GM18951 (cell line): ENCODE measurements at regions of chr17 and their contacts with region 1.

Region 1: GRCh38 chr17:988561-988960 is 8.4 kb upstream of the TIMM22 start:
- POLR2A ChIP-seq: no peak

Region 2: DNA sequence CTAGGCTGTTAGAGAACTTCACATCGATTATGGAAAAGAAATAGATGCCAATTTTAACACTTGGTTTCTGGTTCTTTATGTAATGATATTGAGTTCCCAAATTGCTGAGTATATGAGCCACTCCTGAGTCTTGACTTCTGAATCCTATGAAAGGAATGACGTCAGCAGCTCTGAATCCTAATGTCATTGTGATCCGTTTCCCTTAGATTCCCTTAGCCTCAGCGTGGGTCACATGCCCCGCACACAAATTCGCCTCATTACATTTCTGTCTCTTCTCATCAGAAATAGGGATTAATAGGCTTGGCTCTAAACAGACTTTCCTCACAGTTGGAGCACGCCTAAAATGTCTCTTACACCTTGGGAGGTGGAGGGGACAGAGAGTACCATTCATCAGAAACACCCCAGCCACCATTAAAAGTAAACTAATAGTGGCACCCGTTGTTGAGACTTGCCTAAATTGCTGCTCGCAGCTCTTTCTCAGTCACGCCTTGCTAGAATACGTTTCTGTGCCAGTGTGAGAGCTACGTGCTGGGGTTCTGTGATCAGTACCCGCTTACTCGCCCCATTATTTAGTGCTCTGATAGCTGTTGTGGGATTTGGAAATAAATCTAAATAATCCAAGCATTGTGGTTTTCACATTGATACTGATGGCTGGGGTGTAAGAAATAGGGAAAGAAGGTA is 199.3 kb before region 1 on chr17:
- in situ Hi-C with region 1: loop called (anchors 5 kb)
- POLR2A ChIP-seq: no peak